Breast epithelium (tissue), 4 donors: ENCODE measurements at regions of chr10 and their contacts with region 1.

Region 1: GRCh38 chr10:57225920-57226319 is 864.9 kb upstream of the ZWINT start:
- DNase-seq: no peak
- H3K4me3 ChIP-seq: no peak overlapping the region
- H3K27ac ChIP-seq: no peak overlapping the region
- H3K4me1 ChIP-seq: no peaks in the 10 kb centered on the region
- H3K27me3 ChIP-seq: no peaks in the 10 kb centered on the region
- CTCF ChIP-seq: no peak
- POLR2A ChIP-seq: no peak

Region 2: DNA sequence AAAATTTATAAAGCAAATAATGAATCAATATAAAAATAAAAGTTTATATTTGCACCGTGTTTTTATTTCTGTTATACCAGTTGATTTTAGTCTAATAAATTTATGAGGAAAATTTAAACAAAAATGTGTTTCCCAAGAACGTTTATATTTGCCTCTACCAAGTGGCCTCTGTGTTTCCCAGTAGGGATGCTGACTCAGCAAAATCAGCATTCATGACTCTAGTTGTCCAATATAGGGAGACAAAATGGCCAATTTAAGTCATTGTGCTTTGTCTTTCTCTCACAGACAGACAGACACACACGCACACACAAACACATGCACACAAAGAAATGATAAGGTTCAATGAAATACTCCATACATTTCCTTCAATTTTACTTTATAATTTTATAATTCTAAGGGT is 77.6 kb after region 1 on chr10:
- intact Hi-C with region 1: loop called (anchors 5 kb)
- DNase-seq: no peak
- H3K4me3 ChIP-seq: no peak overlapping the region
- H3K27ac ChIP-seq: no peak overlapping the region
- H3K4me1 ChIP-seq: no peaks in the 10 kb centered on the region
- H3K27me3 ChIP-seq: no peaks in the 10 kb centered on the region
- CTCF ChIP-seq: no peak
- POLR2A ChIP-seq: no peak